ENCODE measurements at regions of chr2 and their contacts with region 1.

Region 1: GRCh38 chr2:100242891-100243619 is 79.2 kb downstream of the LONRF2 start:
- DNase-seq: peak; percentile 45
- ATAC-seq: peak; percentile 93
- H3K4me3 ChIP-seq: no peak overlapping the region
- H3K27ac ChIP-seq: no peak overlapping the region
- H3K4me1 ChIP-seq: no peaks in the 10 kb centered on the region
- H3K27me3 ChIP-seq: peaks cover 0 to 16% of the 10 kb centered on the region in 2 experiments; a peak in 3 of 5 replicates
- CTCF ChIP-seq: peak; percentile 97
- EP300 ChIP-seq: no peak
- POLR2A ChIP-seq: no peak
- RAD21 ChIP-seq: peak; percentile 94

Region 2: GRCh38 chr2:99725820-99726219 is 517.2 kb before region 1 on chr2:
- CTCF ChIA-PET with region 1: interaction called, 8 read pairs
- POLR2A ChIA-PET with region 1: no interaction called
- in situ Hi-C with region 1: loop called (anchors 10 kb)
- intact Hi-C with region 1: loop called (anchors 1 kb)
- DNase-seq: no peak
- ATAC-seq: no peak
- H3K4me3 ChIP-seq: no peak overlapping the region
- H3K27ac ChIP-seq: no peak overlapping the region
- H3K4me1 ChIP-seq: no peaks in the 10 kb centered on the region
- H3K27me3 ChIP-seq: no peaks in the 10 kb centered on the region
- CTCF ChIP-seq: no peak
- EP300 ChIP-seq: no peak
- POLR2A ChIP-seq: no peak
- RAD21 ChIP-seq: no peak

Measured in HepG2 (cell line).